Spleen (tissue), 13 donors: ENCODE measurements at regions of chrX and their contacts with region 1.

Region 1: DNA sequence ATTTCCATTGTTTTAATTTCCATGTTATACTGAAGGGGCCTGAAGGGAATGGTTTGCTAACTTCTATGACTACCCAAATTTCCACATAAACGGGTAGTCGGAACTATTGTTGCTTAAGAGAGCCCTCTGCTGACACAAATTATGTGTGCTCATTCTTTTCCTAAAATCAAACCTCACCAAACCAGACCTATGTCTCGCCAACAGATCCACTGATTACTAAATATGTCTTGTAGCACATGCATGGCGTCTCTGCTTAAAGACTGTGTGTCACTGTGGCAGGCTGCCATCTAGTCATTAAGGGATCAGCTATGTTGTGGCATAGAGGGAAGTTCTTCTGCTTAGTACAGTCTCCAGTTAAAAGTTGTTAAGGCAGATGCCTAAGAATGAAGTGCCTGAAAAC is 25.1 kb downstream of the PIR start:
- DNase-seq: no peak
- H3K4me3 ChIP-seq: no peak overlapping the region
- H3K27ac ChIP-seq: no peak overlapping the region
- H3K4me1 ChIP-seq: no peaks in the 10 kb centered on the region
- H3K27me3 ChIP-seq: peaks cover 0 to 7% (median 0%) of the 10 kb centered on the region in 7 donors
- CTCF ChIP-seq: peak in 5 of 11 experiments; percentile 15 to 24 (median 22)
- POLR2A ChIP-seq: no peak

Region 2: GRCh38 chrX:15356444-15356843 is 111.6 kb before region 1 on chrX:
- intact Hi-C with region 1: loop called (anchors 10 kb)
- DNase-seq: no peak
- H3K4me3 ChIP-seq: no peak overlapping the region
- H3K27ac ChIP-seq: no peak overlapping the region
- H3K4me1 ChIP-seq: no peaks in the 10 kb centered on the region
- H3K27me3 ChIP-seq: peaks cover 0 to 4% (median 0%) of the 10 kb centered on the region in 7 donors
- CTCF ChIP-seq: no peak
- POLR2A ChIP-seq: no peak

Region 3: GRCh38 chrX:15524417-15524816 is 56.4 kb after region 1 on chrX:
- intact Hi-C with region 1: no loop called
- DNase-seq: no peak
- H3K4me3 ChIP-seq: no peak overlapping the region
- H3K27ac ChIP-seq: peak overlapping the region in 3 of 8 donors; percentile 30 to 41 (median 33)
- H3K4me1 ChIP-seq: peaks cover 0 to 5% (median 0%) of the 10 kb centered on the region in 6 donors
- H3K27me3 ChIP-seq: peaks cover 0 to 12% (median 0%) of the 10 kb centered on the region in 7 donors
- CTCF ChIP-seq: no peak
- POLR2A ChIP-seq: no peak